Right lobe of liver (tissue), 6 donors: ENCODE measurements at regions of chr4 and their contacts with region 1.

Region 1: GRCh38 chr4:2977211-2978088 is 14.1 kb downstream of the GRK4 start:
- DNase-seq: no peak
- ATAC-seq: no peak
- H3K4me3 ChIP-seq: no peak overlapping the region
- H3K27ac ChIP-seq: no peak overlapping the region
- H3K4me1 ChIP-seq: no peaks in the 10 kb centered on the region
- H3K27me3 ChIP-seq: no peaks in the 10 kb centered on the region
- CTCF ChIP-seq: no peak
- POLR2A ChIP-seq: no peak

Region 2: GRCh38 chr4:2412885-2413716 is 564.3 kb before region 1 on chr4:
- intact Hi-C with region 1: no loop called
- DNase-seq: peak in 2 of 3 donors; percentile 73 to 77
- ATAC-seq: peak; percentile 65 to 80 (median 74)
- H3K4me3 ChIP-seq: peak overlapping the region in 1 of 3 donors; percentile 6
- H3K27ac ChIP-seq: peak overlapping the region in 2 of 3 donors; percentile 29 to 30
- H3K4me1 ChIP-seq: peaks cover 0 to 15% (median 0%) of the 10 kb centered on the region in 4 donors
- H3K27me3 ChIP-seq: no peaks in the 10 kb centered on the region
- CTCF ChIP-seq: peak in 2 of 4 donors; percentile 17 to 35
- POLR2A ChIP-seq: peak; percentile 25

Region 3: GRCh38 chr4:2923141-2923551 is 54.3 kb before region 1 on chr4:
- intact Hi-C with region 1: no loop called
- DNase-seq: peak in 2 of 3 donors; percentile 6 to 17
- ATAC-seq: no peak
- H3K4me3 ChIP-seq: no peak overlapping the region
- H3K27ac ChIP-seq: no peak overlapping the region
- H3K4me1 ChIP-seq: peaks cover 0 to 11% (median 0%) of the 10 kb centered on the region in 4 donors
- H3K27me3 ChIP-seq: no peaks in the 10 kb centered on the region
- CTCF ChIP-seq: no peak
- POLR2A ChIP-seq: no peak

Region 4: DNA sequence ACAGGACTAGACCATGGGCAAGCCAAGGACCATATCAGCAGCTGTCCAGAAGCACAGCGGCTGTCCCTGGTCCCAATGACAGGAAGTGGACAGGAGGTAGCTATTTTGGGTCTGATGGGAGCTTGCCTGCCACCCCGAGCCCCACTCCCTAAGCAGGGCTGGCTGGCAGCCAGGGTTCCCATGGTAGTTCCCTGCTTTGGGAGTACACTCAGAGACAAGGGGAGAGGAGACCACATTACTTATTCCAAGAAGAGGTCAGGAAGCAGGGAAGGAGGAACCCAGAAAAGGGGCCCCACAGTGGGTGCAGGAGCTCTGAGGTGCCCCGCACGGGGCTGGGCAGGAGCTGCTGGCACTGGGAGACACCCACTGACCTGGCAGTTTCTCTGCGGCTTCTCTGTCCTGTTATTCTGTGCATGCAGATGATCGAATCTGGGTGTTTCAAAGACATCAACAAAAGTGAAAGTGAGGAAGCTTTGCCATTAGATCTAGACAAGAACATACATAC is 60.6 kb after region 1 on chr4:
- intact Hi-C with region 1: loop called in 1 of 2 experiments (anchors 10 kb)
- DNase-seq: peak in 1 of 3 donors; percentile 41
- ATAC-seq: no peak
- H3K4me3 ChIP-seq: no peak overlapping the region
- H3K27ac ChIP-seq: no peak overlapping the region
- H3K4me1 ChIP-seq: peaks cover 0 to 10% (median 0%) of the 10 kb centered on the region in 4 donors
- H3K27me3 ChIP-seq: no peaks in the 10 kb centered on the region
- CTCF ChIP-seq: no peak
- POLR2A ChIP-seq: no peak